ENCODE measurements at regions of chr12 and their contacts with region 1.

Region 1: DNA sequence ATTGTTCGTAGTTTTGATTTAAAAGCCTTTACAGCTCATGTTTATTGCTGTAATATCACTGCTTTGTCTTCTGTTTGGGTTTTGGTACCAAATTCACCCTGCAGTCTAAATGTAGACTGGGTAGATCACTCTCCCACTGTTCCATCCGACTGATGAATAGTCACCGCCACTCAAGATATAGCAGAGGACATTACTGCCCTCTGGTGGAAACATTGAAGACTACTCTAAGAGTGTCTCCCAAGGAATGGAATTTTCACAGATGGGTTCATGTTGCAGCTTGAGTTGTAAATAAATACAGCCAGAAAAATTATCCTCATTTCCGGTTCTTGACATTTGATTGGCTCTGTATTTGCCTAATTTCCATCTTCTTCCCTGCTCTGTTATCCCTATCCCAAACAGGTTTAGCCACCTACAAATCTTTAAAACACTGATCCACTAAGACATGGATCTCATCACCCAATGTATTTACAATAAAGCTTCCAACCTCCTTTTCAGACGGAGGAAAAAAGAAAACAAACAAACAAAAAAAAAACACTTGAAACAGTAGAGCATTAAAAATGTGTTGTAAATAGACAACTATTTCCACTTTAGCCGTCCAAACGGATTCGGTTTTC is 198.3 kb upstream of the CPNE8 start:
- DNase-seq: no peak
- H3K4me3 Mint-ChIP-seq: no peak overlapping the region
- H3K27ac Mint-ChIP-seq: no peak overlapping the region
- H3K4me1 Mint-ChIP-seq: no peaks in the 10 kb centered on the region
- H3K27me3 Mint-ChIP-seq: peaks cover 1% of the 10 kb centered on the region

Region 2: GRCh38 chr12:38332814-38333213 is 770.8 kb before region 1 on chr12:
- intact Hi-C with region 1: loop called (anchors 2 kb)
- DNase-seq: no peak
- H3K4me3 Mint-ChIP-seq: no peak overlapping the region
- H3K27ac Mint-ChIP-seq: no peak overlapping the region
- H3K4me1 Mint-ChIP-seq: no peaks in the 10 kb centered on the region
- H3K27me3 Mint-ChIP-seq: no peaks in the 10 kb centered on the region

Region 3: GRCh38 chr12:38664661-38665269 is 438.9 kb before region 1 on chr12:
- intact Hi-C with region 1: loop called (anchors 10 kb)
- DNase-seq: no peak
- H3K4me3 Mint-ChIP-seq: no peak overlapping the region
- H3K27ac Mint-ChIP-seq: no peak overlapping the region
- H3K4me1 Mint-ChIP-seq: no peaks in the 10 kb centered on the region
- H3K27me3 Mint-ChIP-seq: no peaks in the 10 kb centered on the region

Region 4: DNA sequence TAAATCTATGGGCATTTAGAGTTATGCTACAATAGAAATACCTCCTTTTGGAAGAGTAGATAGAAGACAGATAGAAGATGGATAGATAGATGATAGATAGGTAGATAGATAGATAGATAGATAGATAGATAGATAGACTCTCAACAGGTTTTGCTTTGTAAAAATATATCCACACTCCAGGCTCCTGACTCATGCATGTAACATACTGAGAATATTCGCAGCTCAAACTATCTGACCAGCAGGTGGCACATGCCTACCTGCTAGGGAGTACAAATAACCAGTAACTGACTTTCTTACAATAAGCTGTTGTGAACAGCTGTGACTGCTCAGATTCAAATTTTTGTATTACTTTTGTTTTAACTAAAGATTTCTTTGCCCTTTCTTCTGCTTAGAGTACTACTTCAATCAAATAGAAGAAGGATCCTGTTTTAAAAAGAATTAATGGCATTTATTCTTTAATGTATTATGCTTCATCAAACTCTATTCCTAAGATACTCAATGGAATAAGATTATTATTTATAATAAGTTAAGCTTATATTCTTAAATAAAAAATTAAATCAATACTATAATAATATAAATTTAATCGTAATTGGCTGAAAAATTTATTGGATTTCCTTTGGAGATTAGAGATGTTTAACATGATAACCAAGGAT is 182.5 kb before region 1 on chr12:
- intact Hi-C with region 1: loop called (anchors 1 kb)
- DNase-seq: no peak
- H3K4me3 Mint-ChIP-seq: no peak overlapping the region
- H3K27ac Mint-ChIP-seq: no peak overlapping the region
- H3K4me1 Mint-ChIP-seq: no peaks in the 10 kb centered on the region
- H3K27me3 Mint-ChIP-seq: no peaks in the 10 kb centered on the region

Measured in activated T-helper 2 cell treated with anti-CD3 and anti-CD28 coated beads, Interferon-gamma antibody, Interleukin-2, Interleukin-4, amounts not matched to agents 10 μg/mL and 5 μg/mL and 100 μg/mL, durations not matched to agents 14 hours and 24 hours and 36 hours (primary cell).